MCF 10A (cell line): ENCODE measurements at regions of chr1 and their contacts with region 1.

Region 1: GRCh38 chr1:96559707-96560596 is 161.6 kb upstream of the PTBP2 start:
- DNase-seq: peak; percentile 83
- H3K4me3 Mint-ChIP-seq: peak overlapping the region; percentile 51
- H3K27ac Mint-ChIP-seq: peak overlapping the region; percentile 92
- H3K4me1 Mint-ChIP-seq: peaks cover 17% of the 10 kb centered on the region
- H3K27me3 Mint-ChIP-seq: no peaks in the 10 kb centered on the region
- CTCF ChIP-seq: no peak

Region 2: DNA sequence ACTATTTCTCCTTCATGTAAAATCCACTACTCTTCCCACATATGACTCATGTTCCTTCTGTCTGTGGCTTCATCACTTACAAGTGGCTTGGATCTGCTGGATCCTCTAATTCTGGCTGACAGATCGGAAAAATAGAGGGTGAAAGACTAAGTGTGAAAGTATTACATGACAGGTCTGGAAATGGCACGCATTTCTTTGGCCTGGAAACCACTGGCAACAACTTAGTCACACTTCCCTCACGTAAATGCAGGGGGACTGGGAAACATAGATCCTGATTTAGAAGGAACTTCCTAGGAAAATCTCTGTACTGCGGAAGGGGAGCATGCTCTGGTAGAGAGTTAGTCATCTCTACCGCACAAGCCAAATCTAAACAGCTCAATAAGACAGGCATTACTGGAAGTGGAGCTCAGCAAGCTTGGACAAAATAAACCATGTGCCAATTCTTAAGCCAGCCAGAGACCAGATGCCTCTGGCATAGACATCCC is 143.8 kb before region 1 on chr1:
- CTCF ChIA-PET with region 1: no interaction called
- POLR2A ChIA-PET with region 1: no interaction called
- intact Hi-C with region 1: loop called (anchors 1 kb)
- DNase-seq: peak; percentile 97
- H3K4me3 Mint-ChIP-seq: peak overlapping the region; percentile 44
- H3K27ac Mint-ChIP-seq: peak overlapping the region; percentile 84
- H3K4me1 Mint-ChIP-seq: peaks cover 33% of the 10 kb centered on the region
- H3K27me3 Mint-ChIP-seq: no peaks in the 10 kb centered on the region
- CTCF ChIP-seq: no peak

Region 3: GRCh38 chr1:96721416-96722160 is 161.6 kb after region 1 on chr1 and contains the start of gene PTBP2:
- CTCF ChIA-PET with region 1: no interaction called
- POLR2A ChIA-PET with region 1: no interaction called
- intact Hi-C with region 1: loop called (anchors 2 kb)
- DNase-seq: peak; percentile 77
- H3K4me3 Mint-ChIP-seq: peak within 1 kb of the TSS; percentile 89
- H3K27ac Mint-ChIP-seq: peak within 1 kb of the TSS; percentile 97
- H3K4me1 Mint-ChIP-seq: peaks cover 12% of the 10 kb centered on the region
- H3K27me3 Mint-ChIP-seq: no peaks in the 10 kb centered on the region
- CTCF ChIP-seq: no peak
- total RNA-seq, gene PTBP2: 15.8 and 17.3 TPM in 2 replicates